ENCODE measurements at regions of chr1 and their contacts with region 1.

Region 1: GRCh38 chr1:33080885-33081553 is at the start of gene AZIN2:
- DNase-seq: peak; percentile 97 to 98
- ATAC-seq: peak; percentile 97 to 99 (median 99)
- H3K4me3 ChIP-seq: peak within 1 kb of the TSS; percentile 64 to 97 (median 75)
- H3K27ac ChIP-seq: peak within 1 kb of the TSS in 6 of 10 donors; percentile 41 to 81 (median 70)
- H3K4me1 ChIP-seq: peaks cover 0 to 23% (median 20%) of the 10 kb centered on the region in 9 donors
- H3K27me3 ChIP-seq: peaks cover 0 to 18% (median 0%) of the 10 kb centered on the region in 7 donors
- CTCF ChIP-seq: peak in 1 of 9 donors; percentile 18
- total RNA-seq, gene AZIN2: 1.5 to 6.9 (median 3.1) TPM

Region 2: DNA sequence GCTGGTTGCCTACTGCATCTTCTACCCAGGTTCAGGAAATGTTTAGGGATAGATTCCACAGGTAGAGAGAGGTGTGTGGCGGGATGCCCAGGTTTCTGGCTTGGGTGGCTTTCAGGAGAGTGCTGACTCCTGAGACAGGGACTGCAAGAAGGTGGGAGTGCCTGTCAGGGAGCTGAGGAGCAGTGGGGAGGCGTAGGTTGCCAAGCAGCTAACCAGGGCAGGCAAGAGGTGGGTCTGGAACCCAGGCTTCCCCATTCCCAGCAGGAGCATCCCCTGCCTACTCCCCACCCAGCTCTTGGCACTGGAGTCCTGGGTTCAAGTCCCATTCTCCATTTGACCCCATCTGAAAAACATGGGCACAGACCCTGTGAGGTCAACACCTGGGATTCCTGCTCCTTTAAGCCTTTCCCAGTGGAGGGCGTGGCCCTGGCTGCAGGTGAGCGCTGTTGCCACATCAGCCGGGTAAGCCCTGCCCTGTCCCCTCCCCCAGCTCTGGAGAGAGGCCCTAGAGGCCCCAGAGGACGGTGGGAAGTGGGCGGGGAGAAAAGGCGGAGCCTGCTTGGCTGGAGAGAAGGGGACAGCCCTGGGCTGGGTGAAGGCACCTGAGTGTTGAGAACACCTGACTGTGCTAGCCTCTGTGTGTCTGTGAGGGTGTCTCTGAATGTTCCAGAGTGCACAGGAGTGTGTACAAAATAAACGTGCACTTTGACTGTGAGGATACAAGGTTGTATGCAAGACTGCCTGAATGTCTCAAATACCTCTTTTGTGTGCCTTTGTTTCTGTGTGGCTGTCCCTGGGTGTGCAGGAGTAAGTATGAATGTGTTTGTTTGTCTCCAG is 364.5 kb before region 1 on chr1:
- intact Hi-C with region 1: loop called in 2 of 10 experiments (anchors 5 to 10 kb)
- DNase-seq: peak in 1 of 2 donors; percentile 57
- ATAC-seq: peak; percentile 40 to 78 (median 56)
- H3K4me3 ChIP-seq: no peak overlapping the region
- H3K27ac ChIP-seq: no peak overlapping the region
- H3K4me1 ChIP-seq: peaks cover 0 to 9% (median 0%) of the 10 kb centered on the region in 9 donors
- H3K27me3 ChIP-seq: no peaks in the 10 kb centered on the region
- CTCF ChIP-seq: no peak

Region 3: DNA sequence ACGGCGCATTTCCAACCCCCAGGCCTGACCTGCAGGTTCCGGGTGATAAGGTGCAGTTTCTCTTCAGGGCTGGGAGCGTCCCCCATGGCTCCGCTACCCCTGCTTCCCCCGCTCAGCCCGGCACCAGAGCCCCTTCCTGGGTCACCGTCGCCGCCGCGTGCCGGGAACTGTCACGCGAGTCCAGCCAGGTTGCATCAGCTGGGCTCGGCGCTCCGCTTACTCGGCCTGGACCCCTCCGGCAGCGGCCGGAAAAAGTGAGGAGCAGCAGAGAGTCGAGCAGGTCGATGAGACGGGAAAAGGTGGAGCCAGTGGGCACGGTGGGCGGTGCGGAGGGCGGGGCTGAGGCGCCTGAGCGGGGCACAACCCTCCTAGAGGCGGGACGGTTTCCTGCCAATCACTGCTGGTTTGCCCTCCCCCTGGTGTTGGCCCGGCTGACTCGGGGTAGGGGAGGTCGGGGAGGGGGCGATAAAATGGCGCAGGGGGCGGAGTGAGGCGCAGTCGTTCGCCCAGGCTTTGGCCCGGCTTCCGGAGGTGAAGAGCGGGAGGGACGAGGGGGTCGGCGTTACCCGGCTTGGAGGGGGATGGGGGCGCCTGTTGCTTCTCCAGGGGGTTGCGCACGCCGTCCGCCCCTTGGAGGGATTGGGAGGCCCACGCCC is 263.7 kb before region 1 on chr1 and contains the starts of genes S100PBP and YARS1:
- intact Hi-C with region 1: loop called in 1 of 10 experiments (anchors 10 kb)
- DNase-seq: peak; percentile 100
- ATAC-seq: peak; percentile 96 to 99 (median 98)
- H3K4me3 ChIP-seq: peak within 1 kb of the TSS; percentile 80 to 100 (median 90)
- H3K27ac ChIP-seq: peak within 1 kb of the TSS; percentile 83 to 99 (median 98)
- H3K4me1 ChIP-seq: peaks cover 3 to 57% (median 41%) of the 10 kb centered on the region in 9 donors
- H3K27me3 ChIP-seq: no peaks in the 10 kb centered on the region
- CTCF ChIP-seq: peak in 4 of 9 donors; percentile 6 to 21 (median 9)
- total RNA-seq, gene S100PBP: 9.2 to 18.0 (median 11.5) TPM
- total RNA-seq, gene YARS1: 26.2 to 48.5 (median 31.0) TPM

Region 4: GRCh38 chr1:32870615-32871363 is 210.2 kb before region 1 on chr1 and contains the start of gene FNDC5:
- intact Hi-C with region 1: loop called in 4 of 10 experiments (anchors 2 to 5 kb)
- DNase-seq: peak in 1 of 2 donors; percentile 41
- ATAC-seq: peak; percentile 23 to 68 (median 47)
- H3K4me3 ChIP-seq: peak within 1 kb of the TSS; percentile 42 to 61 (median 52)
- H3K27ac ChIP-seq: peak within 1 kb of the TSS in 8 of 10 donors; percentile 44 to 76 (median 60)
- H3K4me1 ChIP-seq: peaks cover 4 to 44% (median 27%) of the 10 kb centered on the region in 9 donors
- H3K27me3 ChIP-seq: peaks cover 0 to 42% (median 0%) of the 10 kb centered on the region in 7 donors
- CTCF ChIP-seq: no peak
- total RNA-seq, gene FNDC5: 44.7 to 130 (median 73.5) TPM

Region 5: DNA sequence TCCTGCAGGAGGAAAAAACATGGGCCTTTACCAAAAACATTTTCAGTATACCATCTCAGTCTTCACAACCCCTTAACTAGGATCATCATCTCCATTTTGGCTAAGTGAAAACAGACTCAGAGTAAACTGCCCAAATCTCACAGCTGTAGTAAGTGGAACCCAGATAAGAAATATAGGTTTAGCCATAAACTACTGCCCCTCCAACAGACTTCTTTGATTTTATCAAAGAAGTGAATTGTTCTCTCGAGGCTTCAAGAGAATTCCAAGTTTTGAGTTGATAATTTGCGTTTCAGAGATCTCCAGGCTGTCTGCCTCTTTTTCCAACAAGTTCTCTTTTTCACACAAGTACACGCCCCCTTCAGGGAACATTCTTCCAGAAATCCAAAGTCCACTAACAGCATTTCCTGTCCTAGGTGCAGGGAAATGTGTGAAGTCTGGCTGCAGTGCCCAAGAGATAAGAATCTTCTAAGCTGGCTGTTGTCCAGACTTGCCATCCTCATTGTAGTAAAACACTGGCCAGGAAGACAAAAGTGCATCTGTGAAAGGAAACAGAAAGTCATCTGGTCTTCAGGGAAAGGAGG is 147.2 kb before region 1 on chr1:
- intact Hi-C with region 1: loop called in 9 of 10 experiments (anchors 1 to 10 kb)
- DNase-seq: peak in 1 of 2 donors; percentile 38
- ATAC-seq: peak; percentile 28 to 70 (median 62)
- H3K4me3 ChIP-seq: no peak overlapping the region
- H3K27ac ChIP-seq: peak overlapping the region in 7 of 10 donors; percentile 3 to 74 (median 45)
- H3K4me1 ChIP-seq: peaks cover 3 to 32% (median 14%) of the 10 kb centered on the region in 9 donors
- H3K27me3 ChIP-seq: no peaks in the 10 kb centered on the region
- CTCF ChIP-seq: peak in 1 of 9 donors; percentile 28

Region 6: DNA sequence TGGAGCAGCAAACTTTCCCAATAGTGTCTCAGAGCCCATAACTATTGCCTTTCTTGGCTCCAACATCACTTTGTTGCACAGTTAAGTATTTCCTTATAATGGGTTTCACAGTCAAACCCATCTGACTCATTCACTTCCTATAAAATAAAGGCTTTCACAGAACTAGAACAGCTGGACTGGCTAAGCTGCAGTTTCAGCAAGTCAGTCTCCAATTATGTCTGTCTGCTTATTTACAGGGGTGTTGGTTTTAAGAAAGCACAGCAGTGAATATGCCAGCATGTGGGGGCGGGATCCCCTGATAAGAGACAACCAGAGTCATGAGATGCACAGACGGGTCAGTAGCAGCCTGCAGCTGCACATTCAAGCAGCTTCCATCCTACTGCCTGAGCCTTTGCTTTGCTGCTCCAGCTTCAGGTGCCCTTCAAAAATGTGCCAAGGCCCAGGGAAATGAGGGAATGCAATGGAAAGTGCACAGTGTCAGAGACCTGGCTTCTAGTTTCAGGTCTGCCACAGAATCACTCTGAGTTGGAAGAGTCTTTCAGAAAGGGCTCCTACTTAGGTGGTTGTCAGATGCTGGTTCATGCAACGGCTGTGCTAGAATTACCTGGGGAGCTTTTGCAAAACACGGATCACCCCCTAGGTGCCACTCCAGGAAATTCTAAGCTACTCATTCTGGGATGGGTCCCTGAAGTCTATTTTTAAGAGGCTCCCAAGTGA is 141.2 kb before region 1 on chr1:
- intact Hi-C with region 1: loop called in 4 of 10 experiments (anchors 2 to 10 kb)
- DNase-seq: peak in 1 of 2 donors; percentile 73
- ATAC-seq: peak; percentile 74 to 92 (median 83)
- H3K4me3 ChIP-seq: no peak overlapping the region
- H3K27ac ChIP-seq: peak overlapping the region in 6 of 10 donors; percentile 5 to 60 (median 34)
- H3K4me1 ChIP-seq: peaks cover 4 to 56% (median 16%) of the 10 kb centered on the region in 9 donors
- H3K27me3 ChIP-seq: no peaks in the 10 kb centered on the region
- CTCF ChIP-seq: no peak

Measured in heart right ventricle (tissue), 16 donors.